ENCODE measurements at regions of chr10 and their contacts with region 1.

Region 1: DNA sequence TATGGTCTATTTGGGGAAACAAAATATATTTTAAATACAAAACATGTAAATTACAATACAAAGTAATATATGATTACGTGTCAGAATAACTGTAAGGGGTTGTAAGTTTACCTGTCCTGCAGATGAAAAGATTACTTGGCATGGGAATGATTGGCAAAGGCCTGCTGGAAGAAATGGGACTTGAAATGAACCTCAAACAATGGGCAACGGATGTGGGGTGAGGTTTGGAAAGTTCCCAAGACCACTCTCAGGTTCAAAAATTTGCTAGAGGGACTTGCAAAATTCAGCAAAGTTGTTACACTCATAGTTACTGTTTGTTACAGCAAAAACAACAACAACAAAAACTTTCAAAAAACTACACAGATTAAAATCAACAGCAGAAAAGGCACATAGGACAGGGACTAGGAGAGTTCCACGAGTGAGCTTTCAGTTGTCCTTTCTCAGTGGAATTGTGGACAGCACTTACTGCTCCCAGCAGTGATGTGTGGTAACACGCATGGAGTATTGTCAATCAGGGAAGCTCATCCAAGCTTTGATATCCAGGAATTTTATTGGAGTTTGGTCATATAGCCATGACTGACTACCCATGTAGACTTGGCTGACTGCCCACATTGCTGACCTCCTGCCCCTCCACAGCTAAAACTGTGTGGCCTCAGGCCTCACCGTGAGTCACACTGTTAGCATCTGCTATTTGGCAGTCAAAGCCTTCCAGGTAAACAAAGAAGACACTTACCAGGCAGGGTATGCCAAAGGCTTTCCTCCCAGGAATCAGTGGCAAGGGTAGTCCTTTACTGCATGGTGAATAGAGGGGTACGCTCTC is 43.8 kb downstream of the EXOC6 start:
- DNase-seq: peak; percentile 90
- H3K4me3 ChIP-seq: no peak overlapping the region
- H3K27ac ChIP-seq: peak overlapping the region; percentile 13
- H3K4me1 ChIP-seq: peaks cover 33% of the 10 kb centered on the region
- H3K27me3 ChIP-seq: no peaks in the 10 kb centered on the region
- CTCF ChIP-seq: no peak
- POLR2A ChIP-seq: no peak

Region 2: GRCh38 chr10:92873029-92873428 is 19.1 kb before region 1 on chr10:
- CTCF ChIA-PET with region 1: no interaction called
- POLR2A ChIA-PET with region 1: no interaction called
- dilution Hi-C with region 1: no loop called
- intact Hi-C with region 1: loop called (anchors 1 kb)
- DNase-seq: peak; percentile 92
- H3K4me3 ChIP-seq: peak overlapping the region in 1 of 3 experiments; percentile 40
- H3K27ac ChIP-seq: peak overlapping the region; percentile 72
- H3K4me1 ChIP-seq: peaks cover 68% of the 10 kb centered on the region
- H3K27me3 ChIP-seq: no peaks in the 10 kb centered on the region
- CTCF ChIP-seq: no peak
- POLR2A ChIP-seq: peak; percentile 62